ENCODE measurements at regions of chr1 and their contacts with region 1.

Region 1: GRCh38 chr1:67134695-67135094 is at the start of gene C1orf141:
- DNase-seq: peak in 2 of 10 donors; percentile 10 to 44
- H3K4me3 ChIP-seq: peak within 1 kb of the TSS; percentile 11 to 68 (median 48)
- H3K27ac ChIP-seq: no peak within 1 kb of the TSS
- H3K27me3 ChIP-seq: no peaks in the 10 kb centered on the region
- CTCF ChIP-seq: no peak
- total RNA-seq, gene C1orf141: 0.12 to 1.7 (median 0.56) TPM in 46 of 120 experiments, not detected in the others

Region 2: GRCh38 chr1:66705110-66705509 is 429.6 kb before region 1 on chr1:
- intact Hi-C with region 1: no loop called
- DNase-seq: no peak
- H3K4me3 ChIP-seq: no peak overlapping the region
- H3K27ac ChIP-seq: peak overlapping the region in 7 of 59 donors; percentile 6 to 71 (median 45)
- H3K27me3 ChIP-seq: no peaks in the 10 kb centered on the region
- CTCF ChIP-seq: no peak

Region 3: GRCh38 chr1:67053785-67054772 is 80.6 kb before region 1 on chr1 and contains the start of gene SLC35D1:
- intact Hi-C with region 1: loop called in 1 of 2 experiments (anchors 10 kb)
- DNase-seq: peak; percentile 67 to 88 (median 74)
- H3K4me3 ChIP-seq: peak within 1 kb of the TSS; percentile 61 to 95 (median 86)
- H3K27ac ChIP-seq: peak within 1 kb of the TSS; percentile 86 to 99 (median 95)
- H3K27me3 ChIP-seq: no peaks in the 10 kb centered on the region
- CTCF ChIP-seq: peak in 14 of 56 donors; percentile 3 to 36 (median 19)
- total RNA-seq, gene SLC35D1: 5.7 to 12.8 (median 8.3) TPM

Region 4: GRCh38 chr1:67214420-67215174 is 79.9 kb after region 1 on chr1:
- intact Hi-C with region 1: no loop called
- DNase-seq: peak in 1 of 10 donors; percentile 44
- H3K4me3 ChIP-seq: no peak overlapping the region
- H3K27ac ChIP-seq: no peak overlapping the region
- H3K27me3 ChIP-seq: peaks cover 0 to under 1% (median 0%) of the 10 kb centered on the region in 45 donors
- CTCF ChIP-seq: peak in 54 of 56 donors; percentile 18 to 65 (median 46)

Measured in dorsolateral prefrontal cortex (tissue), 120 donors.